ENCODE measurements at regions of chr22 and their contacts with region 1.

Region 1: DNA sequence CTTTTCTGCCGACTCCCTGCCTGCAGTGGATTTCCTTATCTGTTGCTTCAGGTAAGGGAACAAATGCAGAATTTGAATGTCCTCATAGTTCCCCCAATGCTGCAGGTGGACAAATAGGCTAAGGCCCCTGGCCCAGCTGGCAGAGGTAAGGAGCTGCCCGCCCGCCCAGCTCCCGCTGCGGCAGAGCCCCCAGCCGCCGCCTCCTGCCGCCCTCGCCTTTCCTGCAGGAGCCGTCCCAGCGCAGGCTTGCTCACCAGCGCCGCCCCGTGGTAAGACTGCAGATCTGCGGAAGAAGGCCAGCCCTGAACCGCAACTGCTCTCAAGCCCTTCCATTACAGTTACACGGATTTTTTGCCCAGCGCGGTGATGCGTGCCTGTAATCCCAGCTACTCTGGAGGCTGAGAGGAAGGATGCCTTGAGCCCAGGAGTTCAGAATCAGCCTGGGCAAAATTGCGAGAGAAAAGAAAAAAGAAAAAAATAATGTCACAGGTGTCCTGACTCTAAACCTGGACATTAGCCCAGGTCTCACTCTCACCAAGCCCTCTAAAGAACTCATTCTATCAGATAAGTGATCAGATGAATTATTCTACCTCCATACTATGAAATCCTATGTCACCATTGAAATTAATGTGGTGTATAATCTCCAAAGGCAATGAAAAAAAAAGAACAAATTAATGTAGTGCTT is 51.2 kb upstream of the EMID1 start:
- DNase-seq: no peak
- ATAC-seq: peak; percentile 86
- H3K4me3 ChIP-seq: no peak overlapping the region
- H3K27ac ChIP-seq: no peak overlapping the region
- H3K4me1 ChIP-seq: peaks cover 8% of the 10 kb centered on the region
- H3K27me3 ChIP-seq: no peaks in the 10 kb centered on the region; a peak in 1 of 4 replicates
- CTCF ChIP-seq: peak; percentile 86 to 97 (median 89)
- EP300 ChIP-seq: 0 out of 4 replicates have a peak, but pooled peaks of 1 of the 2 experiments have one; percentile 14
- POLR2A ChIP-seq: no peak
- RAD21 ChIP-seq: peak; percentile 80

Region 2: DNA sequence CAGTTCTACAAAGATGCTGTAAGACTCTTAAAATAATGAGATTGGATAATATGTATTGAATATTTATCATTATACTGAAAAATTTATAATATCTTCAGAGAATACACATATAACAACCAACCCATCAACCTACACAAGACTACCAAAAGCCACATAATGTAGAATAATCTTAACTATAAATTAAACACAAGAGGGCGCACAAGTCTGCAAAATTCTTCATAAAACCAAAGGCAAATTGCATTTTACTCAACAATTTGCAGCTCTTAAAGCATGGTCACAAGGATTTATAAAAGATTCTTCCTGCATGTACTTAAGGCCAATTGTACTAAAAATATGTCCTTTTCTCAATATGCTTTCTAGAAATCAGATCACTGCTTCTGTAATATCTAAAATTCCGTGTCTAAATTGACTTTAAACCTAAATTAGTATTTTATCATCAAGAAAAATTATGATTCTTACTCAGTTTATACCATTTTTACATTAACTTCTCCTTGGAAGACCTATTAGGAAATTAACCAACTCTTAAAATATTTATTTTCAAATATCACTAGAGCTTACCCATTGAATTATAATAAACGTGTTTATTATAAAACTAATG is 553.9 kb before region 1 on chr22:
- CTCF ChIA-PET with region 1: interaction called, 14 read pairs
- POLR2A ChIA-PET with region 1: no interaction called
- RAD21 ChIA-PET with region 1: interaction called, 16 read pairs
- SMC1A ChIA-PET with region 1: interaction called, 7 read pairs
- in situ Hi-C with region 1: no loop called
- intact Hi-C with region 1: loop called (anchors 10 kb)
- DNase-seq: no peak
- ATAC-seq: peak; percentile 59
- H3K4me3 ChIP-seq: no peak overlapping the region
- H3K27ac ChIP-seq: no peak overlapping the region
- H3K4me1 ChIP-seq: no peaks in the 10 kb centered on the region
- H3K27me3 ChIP-seq: no peaks in the 10 kb centered on the region
- CTCF ChIP-seq: peak; percentile 23 to 63 (median 37); a peak in 4 of 6 replicates
- EP300 ChIP-seq: no peak
- POLR2A ChIP-seq: no peak
- RAD21 ChIP-seq: peak; percentile 87

Region 3: DNA sequence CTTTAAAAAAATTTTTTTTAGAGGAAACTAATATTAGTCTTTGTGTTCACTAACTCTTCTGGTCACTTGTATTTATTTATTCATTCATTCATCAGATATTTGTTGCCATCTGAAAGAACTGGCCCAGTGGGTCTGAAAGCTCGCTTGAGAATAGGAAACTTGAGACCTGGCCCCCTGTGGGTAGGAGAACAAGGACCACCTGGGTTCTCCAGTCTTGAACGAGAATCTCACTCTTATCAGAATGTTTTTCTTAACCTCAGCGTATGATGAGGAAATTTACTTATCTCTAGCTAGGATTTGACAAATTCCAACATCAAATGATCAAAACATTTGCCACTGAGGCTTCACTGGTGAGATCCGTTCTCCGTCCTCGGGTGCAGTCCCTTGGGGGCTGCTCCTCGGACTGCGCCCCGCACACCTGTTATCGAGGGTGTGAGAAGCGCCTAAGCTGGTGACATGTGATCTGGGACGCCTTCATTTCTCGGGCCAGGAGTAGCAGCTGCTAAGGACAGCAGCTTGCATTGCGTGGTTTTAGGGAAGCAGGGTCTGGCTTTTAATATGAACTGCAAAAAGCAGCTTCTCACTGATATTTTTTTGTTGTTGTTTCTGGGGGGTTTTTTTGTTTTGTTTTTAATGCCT is 99.2 kb before region 1 on chr22:
- CTCF ChIA-PET with region 1: interaction called, 20 read pairs
- POLR2A ChIA-PET with region 1: no interaction called
- RAD21 ChIA-PET with region 1: interaction called, 3 read pairs
- SMC1A ChIA-PET with region 1: interaction called, 7 read pairs
- in situ Hi-C with region 1: no loop called
- intact Hi-C with region 1: no loop called
- DNase-seq: no peak
- ATAC-seq: no peak
- H3K4me3 ChIP-seq: no peak overlapping the region
- H3K27ac ChIP-seq: no peak overlapping the region
- H3K4me1 ChIP-seq: no peaks in the 10 kb centered on the region
- H3K27me3 ChIP-seq: peaks cover 0 to 2% of the 10 kb centered on the region in 2 experiments; a peak in 1 of 4 replicates
- CTCF ChIP-seq: no peak
- EP300 ChIP-seq: no peak
- POLR2A ChIP-seq: no peak
- RAD21 ChIP-seq: no peak

Region 4: DNA sequence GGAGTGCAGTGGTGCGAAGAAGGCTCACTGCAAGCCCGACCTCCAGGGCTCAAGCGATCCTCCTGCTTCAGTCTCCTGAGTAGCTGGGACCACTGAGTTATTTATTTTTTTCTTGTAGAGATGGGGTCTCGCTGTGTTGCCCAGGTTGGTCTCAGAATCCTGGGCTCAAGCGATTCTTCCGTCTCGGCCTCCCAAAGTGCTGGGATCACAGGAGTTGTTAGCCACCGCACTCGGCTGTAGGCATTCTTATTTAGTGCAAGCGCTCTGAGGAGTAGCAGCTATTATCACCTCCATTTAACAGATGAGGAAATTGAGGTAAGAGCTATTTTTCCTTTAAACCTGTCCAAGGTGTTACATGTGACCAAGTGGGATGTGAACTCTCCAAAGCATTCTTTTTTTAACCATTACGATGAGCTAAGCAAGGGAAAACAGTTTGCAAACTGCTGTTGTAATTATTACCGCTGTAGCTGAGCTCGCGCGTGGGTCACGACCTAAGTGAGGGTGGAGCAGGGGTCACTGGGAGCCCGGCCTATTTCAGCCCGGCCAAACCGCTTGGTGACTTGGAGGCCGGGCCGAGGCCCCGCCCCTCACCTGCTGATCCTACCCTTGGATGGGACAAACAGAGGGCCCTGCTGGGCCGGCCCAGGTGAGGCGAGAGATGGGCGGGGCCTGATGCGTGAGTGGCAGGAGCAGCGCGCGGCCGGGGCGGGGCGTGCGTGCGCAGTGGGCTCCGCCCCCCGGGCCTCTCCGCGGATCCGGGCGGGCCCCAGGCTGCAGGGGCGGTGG is 82.1 kb before region 1 on chr22:
- CTCF ChIA-PET with region 1: interaction called, 14 read pairs
- POLR2A ChIA-PET with region 1: no interaction called
- RAD21 ChIA-PET with region 1: interaction called, 8 read pairs
- SMC1A ChIA-PET with region 1: interaction called, 6 read pairs
- in situ Hi-C with region 1: no loop called
- intact Hi-C with region 1: loop called (anchors 5 kb)
- DNase-seq: no peak
- ATAC-seq: peak; percentile 93
- H3K4me3 ChIP-seq: peak overlapping the region; percentile 45; the same call in 1 of the 2 replicates
- H3K27ac ChIP-seq: no peak overlapping the region
- H3K4me1 ChIP-seq: no peaks in the 10 kb centered on the region; the same call in 1 of the 2 replicates
- H3K27me3 ChIP-seq: peaks cover 5 to 15% of the 10 kb centered on the region in 2 experiments
- CTCF ChIP-seq: no peak
- EP300 ChIP-seq: no peak
- POLR2A ChIP-seq: no peak
- RAD21 ChIP-seq: no peak

Region 5: DNA sequence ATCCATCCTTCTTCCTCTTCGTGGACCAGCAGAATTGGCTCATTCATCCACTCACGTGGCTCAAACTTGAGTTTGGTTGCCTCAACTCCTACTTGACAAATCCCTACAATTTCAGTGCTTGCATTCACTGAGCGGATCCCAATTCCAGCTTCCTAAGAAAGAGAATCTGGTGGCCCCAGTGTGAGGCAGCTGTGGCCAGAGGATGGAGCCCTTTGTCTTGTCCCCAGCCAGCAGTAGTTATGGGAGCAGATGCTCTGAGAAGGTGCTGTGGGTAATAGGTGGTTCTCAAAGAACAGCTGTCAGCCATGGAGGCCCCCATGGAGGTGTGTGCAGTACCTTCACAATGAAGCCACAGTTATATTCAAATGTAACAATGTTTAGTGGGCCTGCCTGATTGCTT is 42.4 kb before region 1 on chr22:
- CTCF ChIA-PET with region 1: interaction called, 14 read pairs
- POLR2A ChIA-PET with region 1: no interaction called
- RAD21 ChIA-PET with region 1: interaction called, 6 read pairs
- SMC1A ChIA-PET with region 1: interaction called, 11 read pairs
- in situ Hi-C with region 1: no loop called
- intact Hi-C with region 1: no loop called
- DNase-seq: no peak
- ATAC-seq: no peak; the same call in 2 of the 3 replicates
- H3K4me3 ChIP-seq: no peak overlapping the region
- H3K27ac ChIP-seq: no peak overlapping the region
- H3K4me1 ChIP-seq: no peaks in the 10 kb centered on the region
- H3K27me3 ChIP-seq: no peaks in the 10 kb centered on the region; a peak in 1 of 4 replicates
- CTCF ChIP-seq: peak in 2 of 3 experiments; percentile 6 to 7; a peak in 1 of 6 replicates
- EP300 ChIP-seq: no peak
- POLR2A ChIP-seq: no peak
- RAD21 ChIP-seq: peak; percentile 32; the same call in 1 of the 2 replicates

Region 6: DNA sequence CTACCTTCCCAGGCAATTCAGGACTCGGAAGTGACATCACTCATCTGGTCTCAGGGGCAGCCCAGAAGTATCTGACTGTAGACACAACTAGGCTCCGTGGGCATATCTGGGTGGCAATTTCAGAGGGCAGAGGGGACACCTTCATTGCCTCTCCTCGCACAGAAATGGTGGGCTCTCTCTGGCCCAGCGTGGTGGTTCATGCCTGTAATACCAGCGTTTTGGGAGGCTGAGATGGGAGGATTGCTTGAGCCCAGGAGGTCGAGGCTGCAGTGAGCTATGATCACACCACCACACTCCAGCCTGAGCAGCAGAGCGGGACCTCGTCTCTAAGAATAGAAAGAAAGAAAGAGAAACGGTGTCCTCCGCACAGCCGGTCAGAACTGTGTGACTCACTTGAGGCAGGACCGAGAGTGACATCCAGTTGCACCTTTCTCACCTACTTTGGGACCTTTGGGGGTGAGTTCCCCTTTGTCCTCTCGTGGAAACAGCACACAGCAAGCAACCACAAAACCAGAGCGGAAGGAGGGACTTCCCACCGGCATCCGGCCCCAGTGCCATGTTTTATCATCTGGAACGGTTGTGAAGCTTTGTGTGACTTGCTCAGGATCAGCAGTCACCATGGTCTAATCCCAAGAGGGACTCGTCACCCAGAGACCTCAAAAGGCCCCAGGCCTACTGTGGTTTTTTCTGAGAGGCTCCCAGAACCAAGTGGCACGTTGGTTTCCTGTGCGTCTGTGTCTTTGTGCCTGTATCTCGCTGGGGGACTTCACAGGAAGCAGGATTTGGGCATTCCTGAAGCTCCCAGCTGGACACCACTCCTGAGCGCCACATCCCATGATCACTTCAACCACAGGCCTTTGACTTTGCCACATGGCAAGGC is 12.8 kb after region 1 on chr22:
- CTCF ChIA-PET with region 1: interaction called, 10 read pairs
- POLR2A ChIA-PET with region 1: interaction called, 5 read pairs
- RAD21 ChIA-PET with region 1: interaction called, 13 read pairs
- SMC1A ChIA-PET with region 1: interaction called, 5 read pairs
- in situ Hi-C with region 1: no loop called
- intact Hi-C with region 1: no loop called
- DNase-seq: peak; percentile 100
- ATAC-seq: peak; percentile 88
- H3K4me3 ChIP-seq: no peak overlapping the region
- H3K27ac ChIP-seq: peak overlapping the region; percentile 76
- H3K4me1 ChIP-seq: peaks cover 27% of the 10 kb centered on the region
- H3K27me3 ChIP-seq: no peaks in the 10 kb centered on the region; a peak in 1 of 4 replicates
- CTCF ChIP-seq: no peak
- EP300 ChIP-seq: peak; percentile 98
- POLR2A ChIP-seq: no peak
- RAD21 ChIP-seq: peak; percentile 17; the same call in 1 of the 2 replicates

Region 7: GRCh38 chr22:29208879-29209623 is 54.5 kb after region 1 on chr22:
- CTCF ChIA-PET with region 1: interaction called, 37 read pairs
- POLR2A ChIA-PET with region 1: interaction called, 3 read pairs
- RAD21 ChIA-PET with region 1: interaction called, 8 read pairs
- SMC1A ChIA-PET with region 1: interaction called, 18 read pairs
- in situ Hi-C with region 1: no loop called
- intact Hi-C with region 1: no loop called
- DNase-seq: peak; percentile 25
- ATAC-seq: peak; percentile 66
- H3K4me3 ChIP-seq: peak overlapping the region; percentile 65
- H3K27ac ChIP-seq: peak overlapping the region; percentile 66
- H3K4me1 ChIP-seq: peaks cover 29% of the 10 kb centered on the region
- H3K27me3 ChIP-seq: no peaks in the 10 kb centered on the region; a peak in 1 of 4 replicates
- CTCF ChIP-seq: no peak
- EP300 ChIP-seq: no peak
- POLR2A ChIP-seq: no peak
- RAD21 ChIP-seq: no peak

Region 8: DNA sequence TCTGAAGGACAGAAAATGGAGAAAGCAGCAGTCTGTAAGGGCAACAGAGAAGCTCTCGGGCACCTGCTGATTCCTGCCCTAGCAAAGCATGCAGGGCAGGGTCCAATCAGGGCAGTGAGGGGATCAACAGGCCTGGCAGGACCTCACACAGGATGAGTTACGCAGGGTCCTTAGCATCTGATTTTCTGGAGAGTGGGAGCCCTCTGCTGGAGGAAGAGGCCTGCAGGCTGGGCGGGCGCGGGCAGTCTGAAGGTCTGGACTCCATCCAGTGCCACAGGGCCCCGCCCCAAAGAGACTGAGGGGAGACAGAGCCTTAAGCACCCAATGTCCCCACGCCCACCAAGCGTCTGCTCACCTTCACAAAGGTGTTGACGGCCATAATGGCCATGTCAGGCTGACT is 205.0 kb after region 1 on chr22:
- CTCF ChIA-PET with region 1: no interaction called
- POLR2A ChIA-PET with region 1: no interaction called
- RAD21 ChIA-PET with region 1: no interaction called
- SMC1A ChIA-PET with region 1: no interaction called
- in situ Hi-C with region 1: no loop called
- intact Hi-C with region 1: no loop called
- DNase-seq: no peak
- ATAC-seq: peak; percentile 31; the same call in 1 of the 3 replicates
- H3K4me3 ChIP-seq: no peak overlapping the region
- H3K27ac ChIP-seq: no peak overlapping the region
- H3K4me1 ChIP-seq: peaks cover 8% of the 10 kb centered on the region
- H3K27me3 ChIP-seq: no peaks in the 10 kb centered on the region
- CTCF ChIP-seq: peak in 2 of 3 experiments; percentile 22 to 28; a peak in 1 of 6 replicates
- EP300 ChIP-seq: no peak
- POLR2A ChIP-seq: no peak
- RAD21 ChIP-seq: no peak

Measured in GM12878 (cell line).